ENCODE measurements at regions of chr5 and their contacts with region 1.

Region 1: DNA sequence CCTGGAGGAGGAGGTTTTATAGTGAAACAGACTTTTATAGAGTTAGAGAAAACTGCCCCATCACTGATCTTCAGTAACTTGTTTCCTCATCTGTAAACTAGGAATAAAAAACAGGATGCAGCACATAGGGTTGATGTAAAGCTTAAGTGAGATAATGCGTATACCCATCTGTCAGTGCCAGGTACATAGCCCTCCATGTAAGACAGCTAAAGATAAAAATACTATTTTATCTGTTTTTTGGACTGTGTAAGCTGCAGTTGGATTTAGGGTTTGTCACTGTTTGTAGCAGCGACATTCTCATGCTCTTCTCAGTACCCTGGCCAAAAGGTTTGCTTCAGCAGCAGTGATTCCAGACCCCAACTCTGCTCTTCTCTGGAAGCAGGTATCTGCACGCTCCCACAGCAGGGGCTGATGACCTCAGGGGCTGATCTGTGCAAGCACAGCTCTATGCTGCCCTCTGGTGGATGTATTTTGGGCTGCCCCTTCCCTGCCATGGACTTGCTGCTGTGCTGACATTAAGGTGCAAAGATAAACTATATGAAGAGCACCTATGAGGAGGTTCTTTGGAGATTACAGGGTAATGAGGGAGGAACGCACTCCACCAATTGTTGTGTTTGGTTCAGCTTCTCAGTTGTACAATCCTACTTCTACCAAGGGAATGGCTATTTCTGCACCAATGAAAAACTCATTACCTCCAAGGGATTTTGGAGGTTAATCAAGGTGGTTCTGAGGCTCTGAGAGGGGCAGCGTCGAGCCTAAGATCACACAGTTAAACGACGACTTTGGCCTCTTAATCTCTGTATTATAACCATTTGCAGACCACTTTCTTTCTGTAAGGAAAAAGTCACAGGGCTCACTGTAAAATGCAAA is 13.1 kb downstream of the HMHB1 start:
- DNase-seq: peak; percentile 65
- ATAC-seq: peak; percentile 99
- H3K4me3 ChIP-seq: no peak overlapping the region
- H3K27ac ChIP-seq: no peak overlapping the region
- H3K4me1 ChIP-seq: no peaks in the 10 kb centered on the region
- H3K27me3 ChIP-seq: no peaks in the 10 kb centered on the region
- CTCF ChIP-seq: peak; percentile 79 to 95 (median 90)
- POLR2A ChIP-seq: no peak
- RAD21 ChIP-seq: peak; percentile 98

Region 2: DNA sequence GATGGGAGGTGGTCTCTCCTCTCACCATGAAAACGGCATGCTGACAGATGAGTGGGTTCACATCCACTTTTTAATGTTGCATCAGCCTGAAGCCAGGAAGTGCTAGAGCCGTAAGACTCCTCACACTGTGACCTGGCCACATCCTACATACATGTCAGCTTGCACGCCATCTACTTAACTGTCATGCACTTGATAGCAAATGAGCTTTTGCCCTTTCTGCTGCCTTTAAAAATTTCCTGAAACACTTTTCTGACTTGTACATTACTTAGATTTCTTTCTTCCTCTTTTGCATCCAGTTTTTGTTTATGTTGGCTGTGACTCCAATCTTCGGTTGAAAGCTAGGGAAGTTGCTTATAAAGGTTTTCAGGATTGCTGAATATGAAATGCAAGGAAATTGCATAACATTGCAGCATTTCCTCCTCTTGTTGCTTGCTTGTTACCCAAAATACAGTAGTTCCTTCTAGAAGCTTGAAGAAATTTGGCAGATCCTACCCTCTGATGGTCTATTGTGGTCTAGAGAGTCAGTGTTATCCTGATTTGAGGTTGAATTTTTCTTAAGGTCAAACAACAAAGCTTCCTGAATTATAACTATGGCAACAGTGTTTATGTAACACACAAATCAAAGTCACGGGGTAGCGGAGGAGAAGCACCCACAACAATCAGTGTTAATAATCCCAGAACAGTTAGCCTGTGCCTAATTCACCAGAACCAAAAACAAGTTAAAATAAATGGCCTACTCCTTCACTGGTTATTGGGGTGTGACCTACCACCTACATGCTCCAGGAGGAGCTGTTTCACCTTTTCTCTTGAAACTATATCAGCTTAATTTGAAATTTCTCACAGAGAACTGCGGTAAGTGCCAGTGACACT is 822.4 kb before region 1 on chr5:
- CTCF ChIA-PET with region 1: interaction called, 9 read pairs
- POLR2A ChIA-PET with region 1: no interaction called
- RAD21 ChIA-PET with region 1: no interaction called
- intact Hi-C with region 1: loop called (anchors 2 kb)
- DNase-seq: no peak
- ATAC-seq: peak; percentile 76
- H3K4me3 ChIP-seq: no peak overlapping the region
- H3K27ac ChIP-seq: no peak overlapping the region
- H3K4me1 ChIP-seq: peaks cover 4 to 6% of the 10 kb centered on the region in 2 experiments; a peak in 2 of 4 replicates
- H3K27me3 ChIP-seq: no peaks in the 10 kb centered on the region
- CTCF ChIP-seq: peak; percentile 40 to 63 (median 43); a peak in 4 of 6 replicates
- POLR2A ChIP-seq: no peak
- RAD21 ChIP-seq: peak; percentile 72

Region 3: DNA sequence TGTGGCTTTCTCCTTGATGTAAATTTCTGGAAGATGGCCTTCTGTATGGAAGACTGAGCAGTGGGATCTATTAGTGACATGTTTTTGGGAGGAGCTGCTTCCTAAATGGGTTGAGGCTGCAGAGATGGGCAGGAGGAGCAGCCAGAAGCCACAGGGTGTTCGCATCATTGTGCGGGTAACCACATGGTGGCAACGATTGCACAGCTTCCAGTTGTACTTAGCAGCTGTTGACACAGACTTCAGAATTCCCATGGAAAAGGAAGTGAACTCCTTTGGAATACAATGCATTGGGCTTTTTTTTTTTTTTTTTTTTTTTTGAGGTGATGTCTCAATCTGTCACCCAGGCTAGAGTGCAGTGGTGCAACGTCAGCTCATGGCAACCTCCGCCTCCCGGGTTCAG is 718.9 kb before region 1 on chr5:
- CTCF ChIA-PET with region 1: interaction called, 4 read pairs
- POLR2A ChIA-PET with region 1: no interaction called
- RAD21 ChIA-PET with region 1: no interaction called
- intact Hi-C with region 1: loop called (anchors 1 kb)
- DNase-seq: no peak
- ATAC-seq: peak; percentile 77
- H3K4me3 ChIP-seq: no peak overlapping the region
- H3K27ac ChIP-seq: no peak overlapping the region
- H3K4me1 ChIP-seq: peaks cover 7 to 14% of the 10 kb centered on the region in 2 experiments; a peak in 2 of 4 replicates
- H3K27me3 ChIP-seq: no peaks in the 10 kb centered on the region
- CTCF ChIP-seq: peak; percentile 31 to 49 (median 36); a peak in 2 of 6 replicates
- POLR2A ChIP-seq: no peak
- RAD21 ChIP-seq: peak; percentile 81

Region 4: DNA sequence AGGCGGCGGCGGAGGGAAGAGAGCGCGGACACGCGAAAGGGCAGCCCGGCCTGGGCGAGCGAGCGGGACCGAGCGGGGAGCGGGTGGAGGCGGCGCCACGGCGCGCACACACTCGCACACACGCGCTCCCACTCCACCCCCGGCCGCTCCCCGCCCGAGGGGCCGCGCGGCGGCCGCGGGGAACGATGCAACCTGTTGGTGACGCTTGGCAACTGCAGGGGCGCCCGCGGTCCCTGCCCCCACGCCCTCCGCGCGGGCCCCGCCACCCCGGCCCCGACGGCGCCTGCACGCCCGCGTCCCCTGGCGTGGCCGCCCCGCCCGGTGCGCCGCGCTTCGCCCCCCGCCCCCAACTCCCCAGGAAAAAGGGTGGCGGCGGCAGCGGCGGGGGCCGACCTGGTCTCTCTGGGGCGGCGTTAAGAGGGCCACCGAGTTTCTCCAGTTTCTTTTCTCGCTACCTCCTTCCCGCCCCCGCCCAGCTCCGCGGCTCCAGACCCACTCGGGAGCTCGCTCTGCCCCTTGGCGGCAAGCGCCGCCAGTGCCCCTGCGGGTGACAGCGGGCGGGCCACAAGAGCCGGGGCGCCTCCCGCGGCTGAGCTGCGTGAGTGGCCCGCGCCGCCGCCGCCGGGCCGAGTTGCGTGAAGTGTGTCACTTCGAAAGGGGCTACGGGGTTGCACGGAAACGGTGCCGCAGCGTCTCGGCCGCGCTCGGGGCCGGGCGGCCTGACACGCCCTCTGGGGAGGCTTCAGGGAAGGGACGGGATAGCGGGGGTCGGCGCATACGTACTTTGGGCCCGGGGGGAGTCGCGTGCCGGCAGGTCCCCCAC is 421.3 kb before region 1 on chr5 and contains the start of gene NR3C1:
- CTCF ChIA-PET with region 1: no interaction called
- POLR2A ChIA-PET with region 1: no interaction called
- RAD21 ChIA-PET with region 1: no interaction called
- intact Hi-C with region 1: loop called (anchors 5 kb)
- DNase-seq: no peak
- ATAC-seq: peak; percentile 81
- H3K4me3 ChIP-seq: peak within 1 kb of the TSS; percentile 66 to 77
- H3K27ac ChIP-seq: peak within 1 kb of the TSS; percentile 77
- H3K4me1 ChIP-seq: peaks cover 9 to 14% of the 10 kb centered on the region in 2 experiments; a peak in 2 of 4 replicates
- H3K27me3 ChIP-seq: no peaks in the 10 kb centered on the region
- CTCF ChIP-seq: peak in 2 of 3 experiments; percentile 4 to 46; a peak in 2 of 6 replicates
- POLR2A ChIP-seq: no peak
- RAD21 ChIP-seq: peak; percentile 49
- total RNA-seq, gene NR3C1: 16.0 TPM

Region 5: GRCh38 chr5:143714629-143715028 is 110.5 kb before region 1 on chr5:
- CTCF ChIA-PET with region 1: no interaction called
- POLR2A ChIA-PET with region 1: no interaction called
- RAD21 ChIA-PET with region 1: no interaction called
- intact Hi-C with region 1: no loop called
- DNase-seq: no peak
- ATAC-seq: no peak
- H3K4me3 ChIP-seq: no peak overlapping the region
- H3K27ac ChIP-seq: no peak overlapping the region
- H3K4me1 ChIP-seq: no peaks in the 10 kb centered on the region
- H3K27me3 ChIP-seq: no peaks in the 10 kb centered on the region
- CTCF ChIP-seq: no peak
- POLR2A ChIP-seq: no peak
- RAD21 ChIP-seq: no peak

Region 6: DNA sequence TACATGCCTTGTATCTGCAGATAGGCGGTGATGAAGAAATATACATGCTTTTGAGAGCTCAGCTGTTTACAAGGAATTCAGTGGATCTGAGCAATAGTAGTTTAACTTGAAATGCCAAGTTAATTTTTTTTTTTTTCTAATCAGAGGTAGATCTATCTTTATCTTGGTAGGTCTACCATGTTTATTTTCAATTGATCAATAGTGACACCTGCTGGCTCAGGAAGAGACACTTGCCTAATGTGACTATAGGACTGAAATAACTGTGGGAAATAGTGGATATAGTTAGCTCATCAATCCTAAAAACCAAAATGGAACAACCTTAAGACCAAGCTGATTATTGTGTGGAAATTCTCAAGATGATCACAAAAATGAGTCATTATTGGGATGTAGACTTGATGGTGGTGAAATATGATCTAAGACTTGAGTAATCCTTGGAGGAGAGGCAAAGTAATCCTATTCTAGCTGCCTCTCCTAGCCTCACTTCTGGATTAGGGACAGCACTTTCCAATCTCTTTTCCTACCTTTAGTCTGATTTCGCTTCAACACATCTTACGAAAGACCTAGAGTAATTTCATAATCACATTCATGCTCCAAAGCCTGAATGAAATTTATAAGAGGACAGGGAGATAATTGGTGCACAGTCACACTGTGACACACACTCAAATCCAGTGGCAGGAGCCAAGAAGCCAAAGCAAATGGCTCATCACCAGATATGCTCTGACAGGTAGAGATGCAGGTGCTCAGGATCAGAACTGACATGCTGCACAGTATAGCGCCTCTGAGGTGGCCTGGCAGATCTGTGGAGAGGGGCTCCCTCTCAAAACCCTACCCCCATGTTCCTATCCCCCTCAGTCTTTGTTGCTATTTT is 143.2 kb after region 1 on chr5:
- CTCF ChIA-PET with region 1: interaction called, 3 read pairs
- POLR2A ChIA-PET with region 1: no interaction called
- RAD21 ChIA-PET with region 1: no interaction called
- intact Hi-C with region 1: loop called (anchors 5 kb)
- DNase-seq: peak; percentile 22
- ATAC-seq: peak; percentile 78
- H3K4me3 ChIP-seq: no peak overlapping the region
- H3K27ac ChIP-seq: no peak overlapping the region
- H3K4me1 ChIP-seq: no peaks in the 10 kb centered on the region
- H3K27me3 ChIP-seq: no peaks in the 10 kb centered on the region
- CTCF ChIP-seq: peak; percentile 42 to 66 (median 50); a peak in 4 of 6 replicates
- POLR2A ChIP-seq: no peak
- RAD21 ChIP-seq: peak; percentile 67

Measured in HCT116 (cell line).